MCF 10A (cell line): ENCODE measurements at regions of chr11 and their contacts with region 1.

Region 1: DNA sequence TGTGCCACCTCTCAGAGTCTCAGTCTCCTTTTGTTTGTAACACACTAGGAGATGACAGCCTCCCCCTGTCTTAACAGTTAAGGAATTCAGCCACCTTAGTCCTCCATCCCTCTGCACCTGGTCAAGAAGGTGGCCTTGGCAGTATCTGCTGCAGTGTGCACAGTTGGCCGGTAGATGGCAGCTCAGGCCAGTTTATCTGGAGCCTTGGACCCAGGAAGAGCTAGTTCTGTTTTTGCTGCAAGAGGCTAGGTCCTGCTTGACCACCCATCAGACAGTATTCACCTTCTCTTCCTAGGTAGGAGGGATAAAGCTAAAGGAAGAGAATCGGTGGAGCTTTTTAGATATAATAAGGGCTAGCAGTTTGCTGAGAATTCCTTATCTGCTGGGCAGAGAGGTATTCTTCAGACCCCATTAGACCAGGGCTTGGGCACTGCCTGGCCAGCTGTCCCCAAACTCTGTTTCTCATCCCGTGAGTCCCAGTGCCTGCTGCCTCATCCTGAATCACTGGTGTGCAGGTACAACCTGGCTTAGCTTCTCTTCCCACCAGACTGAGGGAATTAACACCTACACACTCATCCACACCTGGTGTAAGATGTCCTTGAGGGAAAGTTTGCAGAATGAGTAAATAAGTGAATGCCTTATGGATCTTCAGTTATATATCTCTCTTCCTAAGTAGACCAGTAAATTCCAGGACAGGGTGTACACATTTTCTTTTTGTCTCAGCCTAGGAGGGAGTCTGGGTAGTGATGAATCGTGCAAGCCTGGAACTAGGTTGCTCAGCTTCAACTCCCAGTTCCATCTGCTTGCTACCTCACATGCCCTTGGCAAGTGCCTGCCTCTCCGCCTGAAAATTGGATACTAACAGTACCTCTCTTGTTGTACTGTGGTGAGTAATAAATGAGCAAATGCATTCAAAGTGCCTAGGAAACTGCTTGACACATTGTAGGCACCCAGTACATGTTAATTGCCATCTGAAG is 70.8 kb upstream of the NARS2 start:
- DNase-seq: peak; percentile 80
- H3K4me3 Mint-ChIP-seq: peak overlapping the region; percentile 52
- H3K27ac Mint-ChIP-seq: no peak overlapping the region
- H3K4me1 Mint-ChIP-seq: peaks cover 8% of the 10 kb centered on the region
- H3K27me3 Mint-ChIP-seq: peaks cover 12% of the 10 kb centered on the region
- CTCF ChIP-seq: peak; percentile 97

Region 2: DNA sequence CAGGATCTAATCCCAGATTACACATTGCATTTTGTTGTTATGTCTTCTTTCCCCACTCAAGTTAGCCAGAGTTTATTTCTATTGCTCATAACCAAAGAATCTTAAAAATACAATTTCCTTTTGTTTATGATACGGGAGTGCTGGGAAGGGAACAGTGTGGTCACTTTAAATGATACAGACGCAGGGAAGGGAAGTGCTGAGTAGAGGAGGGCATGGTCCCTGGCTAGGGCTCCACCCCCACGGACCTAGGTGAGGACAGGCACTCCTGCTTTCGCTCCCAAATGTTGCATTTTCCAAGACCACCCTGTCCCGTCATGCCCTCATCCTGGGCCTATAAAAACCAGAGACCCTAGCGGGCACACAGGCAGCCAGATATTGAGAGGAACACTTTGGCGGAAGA is 40.2 kb before region 1 on chr11:
- CTCF ChIA-PET with region 1: no interaction called
- POLR2A ChIA-PET with region 1: no interaction called
- intact Hi-C with region 1: no loop called
- DNase-seq: no peak
- H3K4me3 Mint-ChIP-seq: no peak overlapping the region
- H3K27ac Mint-ChIP-seq: no peak overlapping the region
- H3K4me1 Mint-ChIP-seq: peaks cover 5% of the 10 kb centered on the region
- H3K27me3 Mint-ChIP-seq: peaks cover 23% of the 10 kb centered on the region
- CTCF ChIP-seq: no peak

Region 3: DNA sequence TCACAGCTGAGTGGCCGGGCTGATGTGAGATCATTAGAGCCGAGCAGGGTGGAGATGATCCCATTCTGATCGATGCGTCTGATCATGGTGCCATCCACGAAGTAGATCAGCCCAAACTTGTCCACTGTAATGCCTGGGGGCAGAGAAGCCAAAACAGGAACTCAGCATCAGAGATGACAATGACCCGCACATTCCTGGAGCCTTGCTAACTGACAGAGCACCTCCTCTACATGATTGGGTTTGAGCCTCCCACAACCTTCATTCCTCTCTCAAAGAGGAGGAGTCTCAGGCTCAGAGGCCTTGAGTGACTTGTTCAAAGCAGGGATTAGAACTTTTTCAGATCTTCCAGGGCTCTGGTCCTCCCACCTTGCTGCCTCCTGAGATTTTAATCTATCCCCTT is 62.9 kb after region 1 on chr11:
- CTCF ChIA-PET with region 1: interaction called, 166 read pairs
- POLR2A ChIA-PET with region 1: no interaction called
- intact Hi-C with region 1: no loop called
- DNase-seq: peak; percentile 28
- H3K4me3 Mint-ChIP-seq: no peak overlapping the region
- H3K27ac Mint-ChIP-seq: no peak overlapping the region
- H3K4me1 Mint-ChIP-seq: no peaks in the 10 kb centered on the region
- H3K27me3 Mint-ChIP-seq: no peaks in the 10 kb centered on the region
- CTCF ChIP-seq: no peak

Region 4: GRCh38 chr11:78798660-78799059 is 153.1 kb after region 1 on chr11:
- CTCF ChIA-PET with region 1: interaction called, 29 read pairs
- POLR2A ChIA-PET with region 1: no interaction called
- intact Hi-C with region 1: loop called (anchors 10 kb)
- DNase-seq: peak; percentile 71
- H3K4me3 Mint-ChIP-seq: no peak overlapping the region
- H3K27ac Mint-ChIP-seq: no peak overlapping the region
- H3K4me1 Mint-ChIP-seq: peaks cover 23% of the 10 kb centered on the region
- H3K27me3 Mint-ChIP-seq: no peaks in the 10 kb centered on the region
- CTCF ChIP-seq: peak; percentile 66

Region 5: GRCh38 chr11:79076526-79077115 is 431.1 kb after region 1 on chr11:
- CTCF ChIA-PET with region 1: interaction called, 8 read pairs
- POLR2A ChIA-PET with region 1: no interaction called
- intact Hi-C with region 1: loop called (anchors 1 kb)
- DNase-seq: peak; percentile 54
- H3K4me3 Mint-ChIP-seq: no peak overlapping the region
- H3K27ac Mint-ChIP-seq: peak overlapping the region; percentile 74
- H3K4me1 Mint-ChIP-seq: no peaks in the 10 kb centered on the region
- H3K27me3 Mint-ChIP-seq: no peaks in the 10 kb centered on the region
- CTCF ChIP-seq: peak; percentile 49

Region 6: DNA sequence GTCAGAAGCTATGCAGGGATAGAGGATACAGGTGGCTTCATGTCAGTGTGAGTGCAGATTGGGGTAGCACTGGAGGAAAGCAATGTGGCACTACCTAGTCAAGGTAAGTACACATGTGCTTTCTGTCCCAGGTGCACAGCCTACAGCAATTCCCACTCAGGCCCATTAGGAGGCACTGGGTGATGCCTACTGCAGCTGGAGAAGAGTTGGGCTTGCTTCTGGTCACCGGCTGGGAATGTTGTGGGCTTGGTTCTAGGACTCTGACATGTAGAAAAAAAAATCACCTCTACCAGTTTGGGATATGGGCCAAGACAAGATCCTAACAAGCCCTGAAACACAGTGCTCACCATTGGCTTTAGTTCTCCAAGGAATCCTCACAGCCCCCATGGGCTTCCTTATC is 725.6 kb after region 1 on chr11:
- CTCF ChIA-PET with region 1: interaction called, 4 read pairs
- POLR2A ChIA-PET with region 1: no interaction called
- intact Hi-C with region 1: loop called (anchors 10 kb)
- DNase-seq: peak; percentile 20
- H3K4me3 Mint-ChIP-seq: no peak overlapping the region
- H3K27ac Mint-ChIP-seq: no peak overlapping the region
- H3K4me1 Mint-ChIP-seq: peaks cover 14% of the 10 kb centered on the region
- H3K27me3 Mint-ChIP-seq: no peaks in the 10 kb centered on the region
- CTCF ChIP-seq: no peak

Region 7: DNA sequence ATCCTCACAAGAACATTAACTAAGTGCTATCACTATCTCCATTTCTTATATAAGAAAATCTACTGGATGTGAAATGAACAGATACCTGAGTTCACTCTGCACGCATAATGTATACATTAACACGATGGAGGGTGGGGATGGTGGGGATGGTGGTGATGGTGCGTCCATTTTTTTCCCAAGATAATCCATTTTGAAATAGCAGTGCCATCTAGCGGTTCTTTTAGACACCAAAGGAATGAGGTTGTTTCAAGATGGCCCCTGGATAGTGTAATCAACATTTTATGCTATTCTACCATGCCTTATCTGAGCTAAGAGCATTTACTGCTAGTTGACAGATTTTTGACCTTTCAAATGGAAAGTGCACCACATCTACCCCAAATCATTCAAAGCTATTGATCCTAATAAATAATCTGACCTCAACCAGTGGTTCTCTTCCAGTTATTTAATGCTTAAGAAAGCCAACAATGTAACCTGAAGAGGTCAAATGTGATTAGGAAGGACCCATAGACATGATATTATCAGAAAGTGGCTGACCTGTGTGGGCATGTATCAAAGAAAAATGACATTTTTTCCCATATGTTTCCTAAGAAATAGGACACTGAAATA is 1510.0 kb after region 1 on chr11:
- CTCF ChIA-PET with region 1: interaction called, 5 read pairs
- POLR2A ChIA-PET with region 1: no interaction called
- intact Hi-C with region 1: loop called (anchors 10 kb)
- DNase-seq: peak; percentile 55
- H3K4me3 Mint-ChIP-seq: no peak overlapping the region
- H3K27ac Mint-ChIP-seq: no peak overlapping the region
- H3K4me1 Mint-ChIP-seq: no peaks in the 10 kb centered on the region
- H3K27me3 Mint-ChIP-seq: peaks cover 9% of the 10 kb centered on the region
- CTCF ChIP-seq: peak; percentile 67